ENCODE measurements at regions of chr1 and their contacts with region 1.

Region 1: GRCh38 chr1:19974822-19975416 is 4.5 kb downstream of the PLA2G2A start:
- DNase-seq: peak; percentile 83
- ATAC-seq: peak; percentile 95
- H3K4me3 ChIP-seq: no peak overlapping the region
- H3K27ac ChIP-seq: no peak overlapping the region
- H3K4me1 ChIP-seq: peaks cover 7% of the 10 kb centered on the region
- H3K27me3 ChIP-seq: no peaks in the 10 kb centered on the region
- CTCF ChIP-seq: peak; percentile 93

Region 2: GRCh38 chr1:19918057-19918456 is 56.9 kb before region 1 on chr1:
- CTCF ChIA-PET with region 1: interaction called, 4 read pairs
- POLR2A ChIA-PET with region 1: interaction called, 3 read pairs
- intact Hi-C with region 1: loop called (anchors 2 kb)
- DNase-seq: peak; percentile 89
- ATAC-seq: peak; percentile 74
- H3K4me3 ChIP-seq: no peak overlapping the region
- H3K27ac ChIP-seq: no peak overlapping the region
- H3K4me1 ChIP-seq: no peaks in the 10 kb centered on the region
- H3K27me3 ChIP-seq: no peaks in the 10 kb centered on the region
- CTCF ChIP-seq: peak; percentile 96

Region 3: DNA sequence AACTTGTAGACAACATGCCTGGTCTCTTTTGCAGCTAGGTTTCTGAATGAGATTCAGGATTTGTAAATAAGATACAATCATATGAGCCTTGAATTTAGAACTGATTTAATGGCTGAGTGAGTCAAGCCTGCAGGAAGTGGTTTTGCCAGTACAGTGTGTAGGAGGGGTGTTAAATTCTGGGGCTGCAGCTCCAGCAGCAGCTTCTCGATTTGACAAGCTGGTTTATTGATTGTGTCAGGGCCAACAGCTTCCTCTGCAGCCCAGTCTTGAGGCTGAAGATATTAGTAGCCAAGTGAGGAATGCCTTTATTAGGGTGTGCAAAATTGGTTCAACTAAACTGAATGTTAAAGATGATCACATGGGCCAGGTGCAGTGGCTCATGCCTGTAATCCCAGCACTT is 83.6 kb after region 1 on chr1:
- CTCF ChIA-PET with region 1: no interaction called
- POLR2A ChIA-PET with region 1: no interaction called
- intact Hi-C with region 1: loop called (anchors 1 kb)
- DNase-seq: peak; percentile 86
- ATAC-seq: peak; percentile 99
- H3K4me3 ChIP-seq: no peak overlapping the region
- H3K27ac ChIP-seq: no peak overlapping the region; the same call in 1 of the 2 replicates
- H3K4me1 ChIP-seq: peaks cover 21% of the 10 kb centered on the region
- H3K27me3 ChIP-seq: no peaks in the 10 kb centered on the region
- CTCF ChIP-seq: no peak

Region 4: DNA sequence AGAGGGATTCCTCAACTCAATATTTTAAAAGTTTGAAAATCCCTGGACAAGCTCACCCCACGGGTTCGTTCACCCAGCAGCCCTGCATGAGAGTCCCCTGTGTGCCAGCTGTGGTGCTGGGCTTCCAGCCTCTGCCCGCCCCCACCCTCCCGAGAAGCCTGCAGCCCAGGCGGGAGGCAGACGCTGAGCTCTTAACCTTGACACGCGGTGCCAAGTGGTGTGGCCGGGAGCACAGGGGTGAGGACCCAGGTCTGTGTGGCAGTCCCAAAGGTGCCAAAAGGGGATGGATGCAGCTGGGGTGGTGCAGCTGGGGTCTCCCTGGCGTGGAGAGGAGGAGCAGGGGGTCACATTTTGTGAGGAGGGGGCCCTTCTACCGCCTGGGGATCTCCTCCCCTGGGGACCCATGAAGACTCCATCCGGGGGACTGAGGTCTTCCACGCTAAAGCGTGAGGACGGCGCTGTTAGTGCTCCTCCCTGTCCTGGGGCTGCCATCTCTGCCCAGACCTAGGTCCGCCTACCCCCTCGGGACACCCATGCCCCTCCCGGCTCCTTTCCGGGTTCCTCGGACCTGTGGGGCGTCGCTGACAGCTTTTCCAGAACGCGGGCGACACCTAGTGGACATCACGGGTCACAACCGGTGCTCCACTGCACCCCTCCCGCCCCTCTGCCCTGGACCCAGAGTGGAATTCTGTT is 177.1 kb after region 1 on chr1:
- CTCF ChIA-PET with region 1: interaction called, 12 read pairs
- POLR2A ChIA-PET with region 1: no interaction called
- intact Hi-C with region 1: loop called (anchors 1 kb)
- DNase-seq: peak; percentile 80
- ATAC-seq: peak; percentile 95
- H3K4me3 ChIP-seq: peak overlapping the region; percentile 66
- H3K27ac ChIP-seq: no peak overlapping the region
- H3K4me1 ChIP-seq: 0 out of 2 replicates have a peak, but pooled peaks cover 5% of the 10 kb centered on the region
- H3K27me3 ChIP-seq: no peaks in the 10 kb centered on the region
- CTCF ChIP-seq: peak; percentile 89